Sigmoid colon (tissue), 7 donors: ENCODE measurements at regions of chr2 and their contacts with region 1.

Region 1: GRCh38 chr2:8681786-8682692 is at the start of gene ID2:
- DNase-seq: peak; percentile 100
- H3K4me3 ChIP-seq: peak within 1 kb of the TSS; percentile 70 to 96 (median 86)
- H3K27ac ChIP-seq: peak within 1 kb of the TSS; percentile 90 to 99 (median 98)
- H3K4me1 ChIP-seq: peaks cover 0 to 49% (median 33%) of the 10 kb centered on the region in 4 donors
- H3K27me3 ChIP-seq: no peaks in the 10 kb centered on the region
- CTCF ChIP-seq: no peak
- EP300 ChIP-seq: no peak
- POLR2A ChIP-seq: peak; percentile 99 to 100
- total RNA-seq, gene ID2: 376 to 615 (median 527) TPM

Region 2: DNA sequence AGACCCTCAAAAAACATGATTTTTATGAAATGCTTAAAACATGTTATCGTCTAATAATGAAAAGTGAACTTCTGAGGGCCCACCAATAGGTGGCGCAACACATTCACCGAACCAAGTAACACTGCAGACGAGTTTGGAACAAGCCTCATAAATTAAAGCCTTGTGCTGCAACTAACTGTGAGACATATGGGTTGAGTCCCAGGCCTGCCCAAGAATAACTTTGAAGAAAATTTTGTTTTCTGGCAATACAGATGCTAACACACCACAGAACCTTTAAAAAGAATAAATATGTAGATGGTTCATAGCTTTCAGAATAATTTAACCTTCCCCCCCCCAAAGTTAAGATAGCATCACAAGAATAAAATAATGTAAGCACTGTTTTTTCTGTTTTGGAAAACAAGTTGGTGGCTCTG is 1479.0 kb before region 1 on chr2:
- intact Hi-C with region 1: loop called (anchors 1 kb)
- DNase-seq: peak; percentile 76
- H3K4me3 ChIP-seq: no peak overlapping the region
- H3K27ac ChIP-seq: no peak overlapping the region
- H3K4me1 ChIP-seq: peaks cover 0 to 7% (median 0%) of the 10 kb centered on the region in 4 donors
- H3K27me3 ChIP-seq: no peaks in the 10 kb centered on the region
- CTCF ChIP-seq: peak; percentile 38 to 78 (median 72)
- EP300 ChIP-seq: no peak
- POLR2A ChIP-seq: no peak

Region 3: DNA sequence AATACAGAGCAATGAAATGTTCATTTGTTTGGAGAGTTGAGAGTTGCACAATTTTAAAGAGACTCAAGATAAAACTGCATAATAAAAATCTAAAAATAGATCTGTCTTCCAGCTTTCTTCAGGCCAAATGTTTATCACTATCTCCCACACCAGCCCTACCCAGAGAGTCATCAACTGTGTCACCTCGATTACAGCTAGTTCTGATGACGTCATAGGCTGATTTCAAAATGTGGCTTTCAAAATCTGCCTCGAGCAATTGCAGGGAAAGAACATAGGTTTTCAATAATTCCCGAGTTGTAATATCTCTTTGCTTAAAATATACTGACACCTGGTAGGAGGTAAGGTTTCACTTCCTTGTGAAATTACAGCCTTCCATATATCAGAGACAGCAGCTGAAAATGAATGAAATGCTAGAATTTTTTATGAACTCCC is 677.8 kb before region 1 on chr2:
- intact Hi-C with region 1: loop called (anchors 5 kb)
- DNase-seq: peak; percentile 84
- H3K4me3 ChIP-seq: peak overlapping the region in 2 of 4 donors; percentile 8 to 22
- H3K27ac ChIP-seq: peak overlapping the region; percentile 58 to 84 (median 77)
- H3K4me1 ChIP-seq: peaks cover 0 to 18% (median 14%) of the 10 kb centered on the region in 4 donors
- H3K27me3 ChIP-seq: no peaks in the 10 kb centered on the region
- CTCF ChIP-seq: no peak
- EP300 ChIP-seq: peak in 3 of 4 donors; percentile 18 to 83 (median 62)
- POLR2A ChIP-seq: no peak

Region 4: DNA sequence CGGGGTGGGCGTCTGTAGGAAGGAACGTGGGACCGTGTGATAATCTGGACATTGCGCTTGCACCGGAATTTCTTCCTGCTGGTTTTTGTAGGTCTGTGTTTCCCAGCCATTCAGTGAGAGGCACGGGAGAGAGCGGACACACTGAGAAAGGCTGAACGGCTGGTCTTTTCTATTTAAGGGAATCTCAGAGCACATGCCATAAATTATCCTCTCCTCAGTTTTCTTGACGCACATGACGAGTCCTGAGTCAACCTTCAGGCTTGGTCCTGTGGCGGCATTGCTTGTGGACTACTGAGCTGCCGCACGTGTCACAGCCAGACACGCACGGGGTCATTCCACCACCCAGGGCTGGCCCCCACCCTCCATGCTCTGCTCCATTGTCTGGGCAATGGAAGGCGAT is 519.5 kb before region 1 on chr2:
- intact Hi-C with region 1: loop called (anchors 5 kb)
- DNase-seq: peak; percentile 94
- H3K4me3 ChIP-seq: no peak overlapping the region
- H3K27ac ChIP-seq: peak overlapping the region; percentile 21 to 85 (median 82)
- H3K4me1 ChIP-seq: peaks cover 0 to 36% (median 18%) of the 10 kb centered on the region in 4 donors
- H3K27me3 ChIP-seq: no peaks in the 10 kb centered on the region
- CTCF ChIP-seq: no peak
- EP300 ChIP-seq: peak; percentile 78 to 88 (median 82)
- POLR2A ChIP-seq: no peak

Region 5: DNA sequence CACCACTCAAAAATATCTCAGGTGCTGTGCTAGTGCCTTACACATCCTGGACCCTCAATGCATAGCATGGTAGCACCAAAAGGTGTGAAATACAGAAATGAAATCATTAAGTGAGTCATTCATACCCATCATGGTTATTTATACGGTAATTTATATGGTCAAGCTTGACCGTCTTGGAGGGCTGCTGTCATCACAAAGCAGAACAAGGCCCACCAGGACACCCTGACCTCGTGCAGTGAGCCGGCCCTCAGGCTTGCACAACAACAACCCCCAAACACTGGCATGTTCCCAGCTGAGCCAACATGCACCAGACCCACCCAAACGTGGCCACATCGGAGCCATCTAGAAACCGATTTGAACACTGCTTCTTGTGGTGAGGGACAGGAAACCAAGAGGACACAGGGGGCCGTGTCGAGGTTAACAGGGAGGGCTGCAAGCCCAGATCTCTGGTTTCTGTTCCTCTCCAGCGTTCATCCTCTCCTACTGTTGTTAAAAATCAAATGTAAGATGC is 378.7 kb before region 1 on chr2:
- intact Hi-C with region 1: loop called (anchors 10 kb)
- DNase-seq: peak; percentile 85
- H3K4me3 ChIP-seq: no peak overlapping the region
- H3K27ac ChIP-seq: peak overlapping the region in 1 of 4 donors; percentile 72
- H3K4me1 ChIP-seq: peaks cover 0 to 24% (median 10%) of the 10 kb centered on the region in 4 donors
- H3K27me3 ChIP-seq: no peaks in the 10 kb centered on the region
- CTCF ChIP-seq: no peak
- EP300 ChIP-seq: peak in 1 of 4 donors; percentile 23
- POLR2A ChIP-seq: no peak

Region 6: GRCh38 chr2:8761529-8762164 is 79.6 kb after region 1 on chr2:
- intact Hi-C with region 1: loop called (anchors 5 kb)
- DNase-seq: no peak
- H3K4me3 ChIP-seq: no peak overlapping the region
- H3K27ac ChIP-seq: no peak overlapping the region
- H3K4me1 ChIP-seq: peaks cover 0 to 44% (median 26%) of the 10 kb centered on the region in 4 donors
- H3K27me3 ChIP-seq: no peaks in the 10 kb centered on the region
- CTCF ChIP-seq: peak; percentile 34 to 58 (median 50)
- EP300 ChIP-seq: no peak
- POLR2A ChIP-seq: no peak